ENCODE measurements at regions of chr15 and their contacts with region 1.

Region 1: GRCh38 chr15:67065444-67066093 is at the start of gene SMAD3:
- DNase-seq: peak; percentile 79
- ATAC-seq: peak; percentile 56
- H3K4me3 Mint-ChIP-seq: peak within 1 kb of the TSS; percentile 97
- H3K27ac Mint-ChIP-seq: peak within 1 kb of the TSS; percentile 89
- H3K4me1 Mint-ChIP-seq: peaks cover 31% of the 10 kb centered on the region
- H3K27me3 Mint-ChIP-seq: peaks cover 22% of the 10 kb centered on the region
- total RNA-seq, gene SMAD3: 74.1 to 75.9 TPM

Region 2: DNA sequence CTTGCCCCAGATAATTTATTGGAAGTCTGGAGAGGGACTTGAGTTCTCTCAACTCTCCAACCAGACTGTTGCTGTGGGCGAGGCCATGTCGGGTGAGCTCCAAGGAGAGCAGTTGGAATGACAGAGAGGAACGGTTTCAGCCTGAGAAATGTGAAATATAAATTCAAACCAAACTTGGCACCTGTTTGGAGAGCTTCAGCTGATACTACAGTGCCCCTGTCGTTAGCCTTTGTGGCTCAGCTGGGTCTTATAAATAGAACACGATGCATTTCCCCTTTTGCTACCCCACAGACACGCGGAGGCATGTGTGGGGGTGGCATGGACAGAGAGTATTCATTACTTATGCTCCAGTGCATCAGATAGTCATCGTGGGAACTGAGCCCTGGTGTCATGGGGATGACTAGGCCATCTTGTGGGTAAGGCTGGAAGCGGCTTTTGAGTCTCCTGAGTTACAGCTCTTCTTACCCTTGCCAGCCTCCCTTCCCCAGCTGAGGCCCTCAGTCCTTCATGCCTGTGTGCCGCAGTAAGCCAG is 15.4 kb after region 1 on chr15:
- POLR2A ChIA-PET with region 1: interaction called, 15 read pairs
- DNase-seq: no peak
- ATAC-seq: no peak
- H3K4me3 Mint-ChIP-seq: no peak overlapping the region
- H3K27ac Mint-ChIP-seq: no peak overlapping the region
- H3K4me1 Mint-ChIP-seq: peaks cover 60% of the 10 kb centered on the region
- H3K27me3 Mint-ChIP-seq: peaks cover 2% of the 10 kb centered on the region

Region 3: GRCh38 chr15:67085818-67086636 is 20.5 kb after region 1 on chr15:
- POLR2A ChIA-PET with region 1: interaction called, 15 read pairs
- DNase-seq: no peak
- ATAC-seq: peak; percentile 48
- H3K4me3 Mint-ChIP-seq: peak overlapping the region; percentile 55
- H3K27ac Mint-ChIP-seq: peak overlapping the region; percentile 67
- H3K4me1 Mint-ChIP-seq: peaks cover 90% of the 10 kb centered on the region
- H3K27me3 Mint-ChIP-seq: no peaks in the 10 kb centered on the region